AG04449 (cell line): ENCODE measurements at regions of chr3 and their contacts with region 1.

Region 1: DNA sequence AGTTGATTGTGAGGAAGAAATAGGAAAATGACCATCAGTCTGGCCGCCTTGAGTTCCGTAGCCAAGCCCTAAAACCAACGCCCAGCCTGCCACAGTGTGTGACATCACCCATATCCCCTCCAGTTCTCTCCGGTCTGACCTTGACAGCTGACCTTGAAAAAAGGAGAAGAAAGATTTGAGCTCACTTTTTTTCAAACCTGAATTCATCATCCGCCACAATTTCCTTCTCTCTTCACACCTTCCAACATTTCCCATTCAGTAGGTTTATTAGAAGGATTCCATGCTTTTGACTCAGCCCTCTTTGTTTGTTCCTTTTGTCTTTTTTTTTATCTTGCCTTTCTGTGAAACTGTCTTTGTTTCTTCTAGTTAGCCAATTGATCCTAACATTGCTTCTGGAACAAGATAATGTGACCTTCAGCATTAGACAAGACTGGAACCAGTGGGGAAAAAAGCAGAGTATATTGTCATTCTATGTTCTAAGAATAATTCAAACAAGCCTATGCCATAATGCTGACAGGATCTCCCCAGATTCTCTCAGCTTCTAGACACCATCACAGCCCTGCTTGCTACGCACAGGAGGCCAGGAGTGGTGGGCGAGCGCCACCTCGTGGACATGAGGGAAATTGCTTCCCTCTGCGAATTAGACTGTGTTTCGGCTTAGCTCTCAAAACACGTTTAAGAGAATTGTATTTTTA is 283.1 kb downstream of the FGF12 start:
- DNase-seq: peak; percentile 3
- H3K4me3 ChIP-seq: no peak overlapping the region
- CTCF ChIP-seq: peak; percentile 90

Region 2: GRCh38 chr3:190811775-190812480 is 1632.3 kb before region 1 on chr3:
- CTCF ChIA-PET with region 1: interaction called, 12 read pairs
- POLR2A ChIA-PET with region 1: no interaction called
- DNase-seq: peak; percentile 3
- H3K4me3 ChIP-seq: no peak overlapping the region
- CTCF ChIP-seq: peak; percentile 55

Region 3: DNA sequence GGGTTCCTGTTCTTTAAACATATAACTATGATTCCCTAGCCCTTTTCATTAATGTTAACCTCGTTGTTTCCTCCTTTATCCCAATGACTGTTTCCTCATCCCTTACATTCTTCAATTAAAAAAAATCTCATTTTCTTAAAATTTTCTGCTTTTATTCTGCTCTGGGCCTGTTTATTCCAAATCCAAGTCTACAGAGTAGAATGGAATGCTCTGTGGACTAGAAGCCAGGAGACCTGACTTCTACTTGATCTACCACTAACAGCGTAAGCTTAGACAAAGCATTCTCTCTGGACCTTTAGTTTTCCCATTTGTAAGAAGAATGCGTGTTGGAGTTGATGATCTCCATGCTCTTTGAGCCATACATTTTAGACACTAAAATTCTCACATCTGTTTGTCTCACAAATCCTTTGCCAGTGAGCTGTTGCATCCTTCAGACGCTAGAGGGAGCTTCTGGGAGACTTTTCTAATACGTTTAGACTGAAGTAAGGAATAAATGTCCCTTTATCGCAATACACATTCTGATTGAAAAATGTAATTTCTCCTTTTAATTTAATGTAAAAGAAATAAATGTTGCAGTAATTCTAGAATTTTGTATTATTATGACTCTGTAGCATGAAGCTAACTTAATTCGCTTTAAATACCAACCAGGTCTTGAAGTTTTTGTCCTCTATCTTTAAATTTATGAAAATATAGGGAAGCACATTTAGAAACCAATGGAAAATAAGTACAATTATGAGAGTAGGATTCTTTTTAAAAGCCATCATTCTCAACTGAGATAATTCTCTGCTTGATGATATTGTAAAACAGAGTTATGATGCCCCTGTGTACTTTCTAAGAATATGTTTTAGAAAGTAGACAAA is 1560.0 kb before region 1 on chr3:
- CTCF ChIA-PET with region 1: interaction called, 35 read pairs
- POLR2A ChIA-PET with region 1: no interaction called
- DNase-seq: peak; percentile 17
- H3K4me3 ChIP-seq: no peak overlapping the region
- CTCF ChIP-seq: peak; percentile 77

Region 4: DNA sequence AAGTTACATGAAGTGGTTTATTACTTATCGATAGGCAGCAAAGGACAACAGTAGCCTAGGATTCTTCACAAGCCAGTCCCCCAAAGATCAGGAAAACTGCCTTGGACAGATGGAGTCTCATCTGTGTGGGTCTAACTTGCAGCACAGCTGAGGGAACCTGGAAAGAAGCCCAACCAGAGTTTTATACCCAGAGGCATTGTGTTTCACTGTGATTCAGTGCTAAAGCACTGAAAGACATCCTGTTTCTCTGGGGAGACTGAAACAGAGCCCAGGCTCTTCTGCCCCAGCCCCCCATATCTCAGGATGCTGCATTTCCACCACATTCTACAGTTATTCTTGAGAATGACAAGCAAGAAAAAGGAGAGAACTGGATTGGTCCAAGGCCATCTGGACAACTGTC is 1031.5 kb before region 1 on chr3:
- CTCF ChIA-PET with region 1: interaction called, 34 read pairs
- POLR2A ChIA-PET with region 1: no interaction called
- DNase-seq: peak; percentile 82
- H3K4me3 ChIP-seq: no peak overlapping the region; the same call in 1 of the 2 replicates
- CTCF ChIP-seq: no peak

Region 5: DNA sequence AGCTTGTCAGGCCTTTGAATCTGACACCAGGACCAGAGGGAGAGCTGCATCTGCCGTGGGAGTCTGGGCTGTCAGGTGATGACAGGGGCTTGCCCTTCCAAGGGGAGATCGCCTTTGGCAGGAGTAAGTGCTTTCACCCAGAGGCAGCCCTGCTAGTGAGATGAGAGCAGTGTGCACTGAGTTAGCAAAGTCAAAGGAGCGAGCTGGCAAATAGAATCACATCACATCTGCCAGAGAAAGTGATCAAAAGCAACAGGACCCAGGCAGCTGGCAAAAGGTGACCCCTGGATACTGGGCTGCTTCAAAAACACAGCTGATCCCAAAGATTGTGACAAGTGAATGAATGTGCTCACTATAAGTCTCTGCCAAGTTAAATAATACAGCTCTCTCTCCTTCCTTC is 1019.4 kb before region 1 on chr3:
- CTCF ChIA-PET with region 1: interaction called, 16 read pairs
- POLR2A ChIA-PET with region 1: no interaction called
- DNase-seq: no peak
- H3K4me3 ChIP-seq: no peak overlapping the region
- CTCF ChIP-seq: no peak

Region 6: DNA sequence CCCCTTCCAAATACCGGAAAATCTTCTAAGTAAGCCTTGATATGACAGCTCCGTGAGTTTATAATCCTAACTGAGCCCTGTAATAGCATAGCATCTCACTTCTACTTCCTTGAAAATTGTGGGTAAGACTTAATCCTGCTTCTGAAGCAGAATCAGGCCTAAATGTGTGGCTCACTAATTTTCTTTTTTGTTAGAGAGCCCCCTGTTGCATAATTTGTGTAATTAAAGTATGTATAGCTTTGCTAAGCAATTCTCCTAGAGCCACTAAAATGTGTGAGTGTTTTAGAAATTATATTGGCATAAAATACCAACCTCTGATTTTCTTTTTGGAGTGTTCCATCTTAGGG is 21.3 kb before region 1 on chr3:
- CTCF ChIA-PET with region 1: interaction called, 14 read pairs
- POLR2A ChIA-PET with region 1: no interaction called
- DNase-seq: no peak
- H3K4me3 ChIP-seq: no peak overlapping the region
- CTCF ChIP-seq: no peak